WTC11 (cell line): ENCODE measurements at regions of chr4 and their contacts with region 1.

Region 1: DNA sequence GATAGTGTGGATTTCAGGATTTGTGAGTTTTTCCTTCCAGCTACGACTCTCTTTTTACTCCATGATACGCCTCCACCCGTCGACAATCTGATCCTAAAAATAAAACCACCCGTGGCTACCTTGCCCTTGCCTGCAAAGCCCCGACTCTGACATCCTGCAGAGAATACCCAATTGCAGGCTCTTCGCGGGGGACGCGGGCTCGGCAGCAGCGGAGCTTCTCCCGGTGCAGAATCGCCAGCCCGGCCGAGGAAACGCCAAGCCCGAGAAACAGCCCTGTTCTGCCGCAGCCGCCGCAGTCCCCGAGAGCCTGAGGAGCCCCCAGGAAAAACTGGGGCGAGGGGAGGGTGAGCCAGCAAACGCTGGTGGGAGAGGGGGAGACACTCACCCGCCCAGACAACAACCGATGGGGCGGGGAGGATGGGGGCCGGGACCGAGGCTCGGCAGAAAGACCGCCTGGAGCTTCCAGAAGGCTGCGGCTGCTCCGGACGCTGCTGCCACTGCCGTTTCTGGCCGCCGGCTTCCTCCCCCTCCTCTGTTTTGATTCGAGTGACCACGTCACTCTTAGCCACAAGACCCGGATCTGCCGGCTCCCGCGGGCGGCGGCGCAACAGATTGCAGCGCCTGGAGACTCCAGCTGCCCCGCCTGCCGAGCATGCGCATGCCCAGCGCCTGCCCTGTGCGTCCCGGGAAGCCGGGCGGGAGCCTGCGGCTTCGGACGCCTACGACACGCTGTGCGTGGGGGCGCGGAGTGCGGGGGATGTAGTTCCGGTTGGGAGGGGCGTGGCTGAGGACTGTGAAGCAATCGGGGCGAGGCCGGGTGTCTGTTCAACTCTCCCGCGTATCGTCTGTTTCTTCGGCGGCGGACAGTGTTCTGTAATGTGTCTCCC is at the start of gene SMIM14:
- DNase-seq: peak; percentile 94
- ATAC-seq: peak; percentile 72
- H3K4me3 Mint-ChIP-seq: peak within 1 kb of the TSS; percentile 92
- H3K27ac Mint-ChIP-seq: peak within 1 kb of the TSS; percentile 99
- H3K4me1 Mint-ChIP-seq: peaks cover 53% of the 10 kb centered on the region
- H3K27me3 Mint-ChIP-seq: no peaks in the 10 kb centered on the region
- CTCF ChIP-seq: no peak
- total RNA-seq, gene SMIM14: 32.3 to 40.1 TPM (median 38.5 TPM) in 3 replicates

Region 2: GRCh38 chr4:39458505-39459300 is 179.9 kb before region 1 on chr4 and contains the starts of genes LIAS and RPL9:
- CTCF ChIA-PET with region 1: no interaction called
- POLR2A ChIA-PET with region 1: interaction called, 12 read pairs
- DNase-seq: peak; percentile 94
- ATAC-seq: peak; percentile 94
- H3K4me3 Mint-ChIP-seq: peak within 1 kb of the TSS; percentile 99
- H3K27ac Mint-ChIP-seq: peak within 1 kb of the TSS; percentile 99
- H3K4me1 Mint-ChIP-seq: peaks cover 25% of the 10 kb centered on the region
- H3K27me3 Mint-ChIP-seq: no peaks in the 10 kb centered on the region; the same call in 1 of the 2 replicates
- CTCF ChIP-seq: no peak
- total RNA-seq, gene LIAS: 23.1 to 23.5 TPM (median 23.1 TPM) in 3 replicates
- total RNA-seq, gene RPL9: 1,191 to 1,343 TPM (median 1,328 TPM) in 3 replicates

Region 3: GRCh38 chr4:39527273-39528060 is 111.1 kb before region 1 on chr4 and contains the start of gene UGDH:
- CTCF ChIA-PET with region 1: interaction called, 5 read pairs
- POLR2A ChIA-PET with region 1: interaction called, 43 read pairs
- DNase-seq: peak; percentile 96
- ATAC-seq: peak; percentile 97
- H3K4me3 Mint-ChIP-seq: peak within 1 kb of the TSS; percentile 99
- H3K27ac Mint-ChIP-seq: peak within 1 kb of the TSS; percentile 99
- H3K4me1 Mint-ChIP-seq: peaks cover 22% of the 10 kb centered on the region
- H3K27me3 Mint-ChIP-seq: peaks cover 9% of the 10 kb centered on the region
- CTCF ChIP-seq: no peak
- total RNA-seq, gene UGDH: 80.2 to 97.5 TPM (median 89.0 TPM) in 3 replicates

Region 4: DNA sequence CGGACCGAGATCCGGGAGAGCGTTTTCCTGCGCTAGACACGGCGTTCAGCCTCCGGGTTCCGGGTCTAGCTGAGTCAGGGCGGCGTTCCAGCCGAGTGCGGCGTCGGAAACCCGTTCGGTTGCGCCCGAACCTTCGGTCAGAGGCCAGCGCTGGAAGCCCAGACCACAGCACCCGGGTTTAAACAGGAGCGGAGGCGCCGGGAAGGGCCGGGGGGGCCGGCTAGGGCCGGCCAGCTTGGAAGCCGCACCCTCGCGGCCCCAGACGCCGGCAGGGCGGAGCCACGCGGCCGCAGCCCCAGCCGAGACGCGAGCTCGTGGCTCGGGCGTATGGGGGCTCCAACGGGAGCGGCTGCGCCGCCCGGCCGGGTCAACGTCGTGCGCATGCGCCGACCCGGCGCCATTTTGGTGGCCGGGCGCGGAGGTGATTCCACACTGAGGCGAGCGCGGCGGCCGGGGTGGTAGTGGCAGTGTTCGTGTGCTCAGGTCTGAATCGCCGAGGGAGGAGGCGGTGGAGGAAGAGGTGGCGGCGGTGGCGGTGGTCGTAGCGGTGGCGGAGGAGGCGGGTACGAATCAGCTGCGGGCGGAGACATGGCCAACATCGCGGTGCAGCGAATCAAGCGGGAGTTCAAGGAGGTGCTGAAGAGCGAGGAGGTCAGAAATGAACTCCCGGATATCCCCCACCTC is 59.3 kb after region 1 on chr4 and contains the start of gene UBE2K:
- CTCF ChIA-PET with region 1: no interaction called
- POLR2A ChIA-PET with region 1: interaction called, 23 read pairs
- DNase-seq: peak; percentile 87
- ATAC-seq: peak; percentile 92
- H3K4me3 Mint-ChIP-seq: peak within 1 kb of the TSS; percentile 99
- H3K27ac Mint-ChIP-seq: peak within 1 kb of the TSS; percentile 99
- H3K4me1 Mint-ChIP-seq: peaks cover 27% of the 10 kb centered on the region
- H3K27me3 Mint-ChIP-seq: no peaks in the 10 kb centered on the region
- CTCF ChIP-seq: no peak
- total RNA-seq, gene UBE2K: 131 to 138 TPM (median 135 TPM) in 3 replicates